ENCODE measurements at regions of chr9 and their contacts with region 1.

Region 1: GRCh38 chr9:26946753-26947727 is at the start of gene PLAA:
- DNase-seq: peak in 1 of 2 donors; percentile 95
- H3K4me3 ChIP-seq: peak within 1 kb of the TSS; percentile 98 to 100
- H3K27ac ChIP-seq: peak within 1 kb of the TSS; percentile 97
- H3K4me1 ChIP-seq: peaks cover 41% of the 10 kb centered on the region
- H3K27me3 ChIP-seq: no peaks in the 10 kb centered on the region
- CTCF ChIP-seq: no peak
- POLR2A ChIP-seq: no peak
- total RNA-seq, gene PLAA: 28.5 TPM

Region 2: DNA sequence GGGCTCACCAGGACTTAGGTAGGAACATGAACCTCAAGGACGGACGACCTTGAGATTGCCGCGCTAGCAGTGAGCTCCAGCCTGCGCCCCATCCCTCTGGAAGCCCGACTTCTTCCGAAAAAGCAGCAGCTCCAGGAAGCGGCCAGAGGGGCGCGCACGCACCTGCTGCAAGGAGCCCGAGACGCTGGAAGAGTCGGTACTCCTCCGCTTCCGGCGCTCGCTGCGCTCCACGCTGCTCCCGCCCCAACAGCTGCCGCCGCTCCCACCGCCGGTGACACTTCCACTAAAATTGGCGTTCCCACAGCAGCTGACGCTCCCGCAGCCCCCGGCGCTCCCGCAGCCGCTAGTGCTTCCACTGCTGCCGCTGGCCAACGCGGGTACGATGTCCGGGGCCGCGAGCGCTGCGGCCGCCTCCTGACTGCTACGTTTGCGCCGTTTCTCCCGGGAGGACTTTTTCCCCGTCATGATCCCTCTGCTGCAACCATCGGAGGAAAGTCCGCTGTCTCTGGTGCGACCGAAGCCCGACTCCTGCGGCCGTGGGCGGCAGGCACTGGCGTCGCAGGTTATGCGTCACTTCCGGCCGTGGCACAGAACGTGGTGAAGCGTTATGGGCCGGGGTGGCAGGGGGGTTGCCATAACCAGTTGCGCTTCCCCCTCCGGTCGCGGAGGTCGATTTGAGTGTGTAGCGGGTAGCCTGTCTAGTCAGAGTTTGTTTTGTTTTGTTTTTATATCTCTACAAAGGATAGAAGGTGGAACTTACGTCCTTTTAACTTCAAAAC is 54.6 kb before region 1 on chr9 and contains the start of gene CAAP1:
- intact Hi-C with region 1: loop called (anchors 10 kb)
- DNase-seq: peak in 1 of 2 donors; percentile 92
- H3K4me3 ChIP-seq: peak within 1 kb of the TSS; percentile 84 to 95
- H3K27ac ChIP-seq: peak within 1 kb of the TSS; percentile 89
- H3K4me1 ChIP-seq: peaks cover 19% of the 10 kb centered on the region
- H3K27me3 ChIP-seq: no peaks in the 10 kb centered on the region
- CTCF ChIP-seq: no peak
- POLR2A ChIP-seq: no peak
- total RNA-seq, gene CAAP1: 10.6 TPM

Region 3: DNA sequence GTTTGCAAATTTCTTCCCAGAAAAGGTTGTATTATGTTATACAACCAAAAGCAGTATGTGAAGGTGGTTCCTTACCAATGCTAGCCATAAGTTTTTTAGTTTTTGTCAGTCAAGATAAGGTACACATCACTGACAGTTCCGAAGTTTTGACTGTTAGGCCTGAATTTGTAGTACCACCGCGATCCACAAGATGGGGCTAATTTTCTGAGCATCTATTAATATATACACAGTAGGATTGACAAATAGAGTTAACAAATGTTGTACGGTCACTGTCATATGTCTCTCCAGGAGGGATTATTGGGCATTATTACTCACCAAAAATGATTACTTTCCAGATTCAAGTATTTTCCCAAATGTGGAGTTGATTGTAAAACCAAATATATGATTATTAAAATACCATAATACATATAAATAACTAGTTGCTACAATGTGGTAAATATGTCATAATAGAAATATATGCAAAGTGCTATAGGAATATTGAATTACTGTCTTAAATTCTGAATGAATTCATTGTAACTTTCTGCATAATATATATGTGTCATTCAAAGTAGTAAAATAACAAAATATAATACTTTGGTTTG is 86.9 kb after region 1 on chr9:
- intact Hi-C with region 1: no loop called
- DNase-seq: no peak
- H3K4me3 ChIP-seq: no peak overlapping the region
- H3K27ac ChIP-seq: no peak overlapping the region
- H3K4me1 ChIP-seq: no peaks in the 10 kb centered on the region
- H3K27me3 ChIP-seq: no peaks in the 10 kb centered on the region
- CTCF ChIP-seq: peak; percentile 54 to 70 (median 54)
- POLR2A ChIP-seq: no peak

Measured in vagina (tissue), 2 donors.